A673 (cell line): ENCODE measurements at regions of chr5 and their contacts with region 1.

Region 1: DNA sequence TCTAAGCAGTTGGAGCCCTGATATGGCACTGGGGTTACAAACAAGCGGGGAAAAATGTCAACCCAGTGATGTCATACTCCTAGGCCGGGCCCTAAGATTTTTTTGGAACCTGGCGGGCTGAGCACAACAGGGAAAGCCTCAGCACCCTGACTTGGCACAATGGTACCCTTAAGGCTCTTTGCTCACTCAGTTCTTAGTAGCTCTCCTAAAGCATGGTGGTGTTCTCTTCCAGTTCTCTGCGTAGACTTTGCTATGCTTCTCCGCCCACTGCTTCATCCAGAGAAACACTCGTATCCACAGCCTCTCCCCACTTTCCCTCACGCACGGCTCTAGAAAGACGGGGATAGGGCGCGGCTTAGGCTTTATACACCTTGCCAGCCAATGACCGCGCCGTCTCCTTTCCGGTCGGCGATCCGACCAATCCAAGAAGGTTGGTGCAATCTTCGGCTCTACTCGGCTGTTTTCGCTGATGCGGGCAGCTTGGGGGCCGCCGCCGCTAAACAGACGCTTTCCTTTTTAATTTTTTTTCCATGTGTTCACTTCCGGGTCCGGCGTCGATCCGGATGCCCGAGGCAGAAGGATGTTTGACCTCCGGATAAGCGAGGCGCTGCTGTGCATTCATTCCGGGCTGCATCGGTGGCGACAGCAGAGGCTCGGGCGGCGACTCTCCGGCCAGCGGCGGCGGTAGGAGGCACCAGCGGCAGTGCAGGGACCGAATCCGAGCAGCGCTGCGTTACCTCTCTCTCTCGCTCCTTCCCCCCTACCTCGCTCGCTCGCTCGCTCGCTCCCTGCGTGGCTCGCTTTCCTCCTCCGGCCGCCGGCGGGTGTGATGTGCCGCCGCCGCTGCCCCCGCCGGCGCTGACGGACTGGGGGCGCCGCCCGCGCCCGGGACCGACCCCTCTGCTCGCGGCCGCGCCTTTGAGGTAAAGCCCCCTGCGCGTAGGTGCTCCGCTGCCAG is at the start of gene CSNK1G3:
- DNase-seq: peak; percentile 98
- H3K4me3 ChIP-seq: peak within 1 kb of the TSS; percentile 79
- H3K27ac ChIP-seq: peak within 1 kb of the TSS; percentile 92
- H3K4me1 ChIP-seq: peaks cover 16% of the 10 kb centered on the region
- H3K27me3 ChIP-seq: no peaks in the 10 kb centered on the region
- CTCF ChIP-seq: no peak
- total RNA-seq, gene CSNK1G3: 42.1 and 43.1 TPM in 2 replicates

Region 2: DNA sequence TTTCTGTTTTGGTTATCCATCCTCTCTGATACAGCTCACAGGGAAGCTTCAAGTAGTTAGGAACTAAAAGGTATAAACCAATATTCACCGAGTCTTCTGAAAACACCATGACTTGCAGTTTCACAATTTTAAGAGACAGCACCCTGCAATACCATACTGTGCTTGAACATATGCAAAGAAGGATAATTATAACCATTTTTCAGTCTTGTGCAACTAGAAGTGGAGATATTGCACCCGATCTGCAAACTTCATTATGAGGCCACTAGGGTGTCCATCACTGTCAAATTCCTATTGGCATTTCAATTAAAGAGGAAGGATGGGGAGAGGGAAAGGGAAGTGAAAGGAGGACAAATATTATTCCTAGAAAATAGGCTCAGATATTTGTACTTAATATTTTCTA is 56.3 kb before region 1 on chr5:
- CTCF ChIA-PET with region 1: no interaction called
- POLR2A ChIA-PET with region 1: no interaction called
- intact Hi-C with region 1: loop called (anchors 2 kb)
- DNase-seq: peak; percentile 44
- H3K4me3 ChIP-seq: no peak overlapping the region
- H3K27ac ChIP-seq: peak overlapping the region; percentile 68
- H3K4me1 ChIP-seq: peaks cover 56% of the 10 kb centered on the region
- H3K27me3 ChIP-seq: no peaks in the 10 kb centered on the region
- CTCF ChIP-seq: peak; percentile 50

Region 3: DNA sequence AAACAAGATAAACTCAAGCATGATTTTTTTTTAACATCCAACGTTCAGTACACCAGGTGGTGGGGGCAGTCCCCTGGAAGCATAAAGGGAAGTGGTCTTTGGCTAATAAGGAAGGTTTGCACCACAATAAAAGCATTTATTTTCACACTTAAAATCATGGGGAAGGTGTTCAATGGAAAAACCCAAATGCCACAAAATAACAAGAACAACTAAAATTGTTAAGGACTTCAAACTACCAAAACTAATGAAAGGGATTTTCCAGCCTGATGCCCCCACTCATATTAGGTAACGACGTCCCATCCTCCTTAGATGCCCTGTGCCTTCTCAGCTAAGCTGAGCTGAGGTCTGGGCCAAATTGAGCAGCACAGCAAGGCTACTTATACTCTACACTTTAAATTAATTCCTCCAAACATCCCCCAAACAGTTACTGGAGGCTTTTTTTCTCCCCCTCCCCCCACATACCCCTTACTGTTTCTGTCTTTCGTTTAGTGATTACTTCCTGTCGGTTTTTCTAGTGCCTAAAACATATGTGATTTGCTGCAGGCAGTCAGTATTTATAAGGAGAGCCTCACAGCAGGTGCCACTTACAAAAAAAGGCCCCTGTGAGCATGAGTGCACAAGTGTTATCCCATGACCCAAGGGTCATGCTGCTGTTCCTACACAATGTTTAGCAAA is 1494.2 kb after region 1 on chr5:
- CTCF ChIA-PET with region 1: no interaction called
- POLR2A ChIA-PET with region 1: no interaction called
- intact Hi-C with region 1: no loop called
- DNase-seq: peak; percentile 85
- H3K4me3 ChIP-seq: no peak overlapping the region
- H3K27ac ChIP-seq: no peak overlapping the region
- H3K4me1 ChIP-seq: peaks cover 17% of the 10 kb centered on the region
- H3K27me3 ChIP-seq: peaks cover 15% of the 10 kb centered on the region
- CTCF ChIP-seq: no peak